ENCODE measurements at regions of chr2 and their contacts with region 1.

Region 1: DNA sequence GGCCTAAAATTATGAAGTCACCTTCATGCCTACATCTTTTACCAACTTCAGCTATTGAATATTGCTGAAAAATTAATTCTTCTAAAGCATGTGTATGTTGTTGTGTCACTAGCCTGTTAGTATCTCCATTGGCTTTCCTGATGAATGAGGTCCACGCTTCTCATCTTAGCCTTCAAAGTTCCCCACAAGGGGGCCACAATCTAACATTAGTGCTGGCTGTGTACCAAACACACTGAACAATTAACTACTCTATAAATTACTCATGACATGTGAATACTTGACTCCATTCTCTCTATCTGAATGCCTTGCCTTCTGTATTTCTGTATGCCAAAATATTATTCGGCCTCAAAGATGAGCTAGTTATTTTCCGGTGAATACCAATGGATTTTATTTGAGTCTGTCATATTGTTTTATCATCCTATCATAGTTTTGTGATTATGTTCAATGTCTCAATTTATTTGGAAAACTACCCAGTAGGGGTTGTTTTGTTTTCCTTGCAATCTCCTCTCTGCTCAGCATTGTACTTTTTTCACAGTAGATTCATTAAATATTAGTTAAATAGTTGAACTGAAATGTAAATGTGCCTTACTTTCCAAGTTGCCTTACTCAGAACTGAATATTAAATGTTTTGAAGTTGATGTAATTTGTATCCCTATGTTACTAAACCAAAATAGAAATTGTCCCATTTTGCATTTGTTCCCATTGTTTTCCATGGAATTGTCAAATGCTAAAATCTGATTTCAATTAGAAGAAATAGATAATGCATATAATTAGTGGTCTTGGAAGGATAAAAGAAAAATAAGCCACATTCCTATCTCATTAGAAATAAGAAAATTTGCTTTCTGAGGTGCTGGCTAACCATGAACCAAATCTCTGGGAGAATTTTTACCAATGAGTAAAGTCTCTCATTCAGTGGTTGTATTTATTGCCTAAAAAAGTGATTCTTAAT is 208.4 kb upstream of the COL3A1 start:
- DNase-seq: no peak
- ATAC-seq: peak; percentile 83
- H3K4me3 ChIP-seq: no peak overlapping the region
- H3K27ac ChIP-seq: no peak overlapping the region
- H3K4me1 ChIP-seq: no peaks in the 10 kb centered on the region
- H3K27me3 ChIP-seq: no peaks in the 10 kb centered on the region
- CTCF ChIP-seq: peak in 2 of 3 experiments; percentile 12 to 35; a peak in 2 of 6 replicates
- EP300 ChIP-seq: no peak
- POLR2A ChIP-seq: no peak
- RAD21 ChIP-seq: peak; percentile 31; the same call in 1 of the 2 replicates

Region 2: DNA sequence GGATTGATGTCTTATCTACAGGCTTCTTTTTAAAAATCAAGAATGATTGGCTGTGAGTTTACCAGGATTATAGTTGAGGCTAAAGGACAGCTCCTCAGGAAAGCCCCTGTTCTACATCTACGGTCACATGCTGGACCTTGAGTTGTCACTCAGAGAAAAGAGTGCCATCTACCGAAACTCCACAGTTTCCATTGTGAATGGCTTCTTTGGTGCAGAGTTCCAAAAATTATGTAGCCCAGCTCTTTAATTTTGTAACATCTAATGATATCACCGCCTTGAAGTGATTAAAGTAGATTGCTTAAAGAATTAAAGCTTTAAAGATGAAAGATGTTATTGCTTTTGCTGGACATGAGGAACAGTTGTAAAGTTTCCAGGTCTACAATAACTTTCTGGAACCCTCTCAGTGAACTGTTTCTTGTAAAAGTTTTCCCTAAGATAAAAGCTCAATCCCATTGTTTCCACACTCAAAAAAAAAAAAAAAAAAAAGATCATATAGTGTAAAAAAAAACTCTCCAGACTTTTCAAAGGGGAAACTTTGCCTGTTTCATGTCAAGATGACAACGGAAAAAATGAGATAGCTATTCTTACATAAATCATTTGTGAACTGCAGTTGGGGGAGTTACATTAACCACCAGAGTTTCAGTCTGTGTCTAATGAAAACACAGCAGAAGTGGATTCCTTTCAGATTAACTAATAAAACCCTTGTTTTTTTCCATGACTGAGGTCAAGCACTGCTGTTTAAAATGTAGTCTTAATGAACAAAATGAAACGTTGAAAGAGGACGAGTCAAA is 212.7 kb after region 1 on chr2:
- CTCF ChIA-PET with region 1: interaction called, 10 read pairs
- POLR2A ChIA-PET with region 1: no interaction called
- RAD21 ChIA-PET with region 1: interaction called, 5 read pairs
- SMC1A ChIA-PET with region 1: interaction called, 3 read pairs
- in situ Hi-C with region 1: no loop called
- intact Hi-C with region 1: no loop called
- DNase-seq: peak; percentile 23
- ATAC-seq: peak; percentile 94
- H3K4me3 ChIP-seq: no peak overlapping the region
- H3K27ac ChIP-seq: no peak overlapping the region
- H3K4me1 ChIP-seq: no peaks in the 10 kb centered on the region
- H3K27me3 ChIP-seq: no peaks in the 10 kb centered on the region
- CTCF ChIP-seq: peak; percentile 20 to 52 (median 24); a peak in 2 of 6 replicates
- EP300 ChIP-seq: peak; percentile 62 to 70; a peak in 3 of 4 replicates
- POLR2A ChIP-seq: no peak
- RAD21 ChIP-seq: peak; percentile 52; the same call in 1 of the 2 replicates

Region 3: DNA sequence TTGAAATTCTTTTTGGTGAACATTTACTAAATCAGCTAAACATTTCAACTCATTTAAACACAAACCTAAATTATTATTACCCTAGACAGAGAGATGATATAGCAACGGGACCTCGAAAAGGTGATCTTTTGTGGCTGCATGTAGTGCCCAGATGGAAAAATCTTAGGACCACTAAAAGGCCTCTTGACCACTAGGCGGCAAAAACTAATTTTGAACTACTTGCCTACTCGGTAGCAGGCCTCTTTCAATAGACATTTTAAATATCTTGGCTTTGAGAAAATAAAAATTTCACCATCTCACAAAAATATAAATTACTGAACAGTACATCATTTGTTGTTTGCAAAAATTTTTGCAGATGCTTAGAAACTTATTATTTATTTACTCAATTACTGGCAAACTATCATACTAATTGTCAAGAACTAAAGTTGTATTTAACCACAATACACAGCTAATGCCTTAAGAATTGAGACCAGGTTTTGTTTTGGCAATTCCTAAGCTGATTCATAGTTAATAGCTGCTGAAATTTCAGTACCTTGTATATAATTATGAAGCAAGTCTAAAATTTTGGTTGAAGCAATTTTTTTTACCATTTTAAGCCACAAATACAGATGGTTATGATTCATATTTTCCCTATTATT is 217.8 kb after region 1 on chr2:
- CTCF ChIA-PET with region 1: interaction called, 10 read pairs
- POLR2A ChIA-PET with region 1: no interaction called
- RAD21 ChIA-PET with region 1: interaction called, 5 read pairs
- SMC1A ChIA-PET with region 1: interaction called, 7 read pairs
- in situ Hi-C with region 1: no loop called
- intact Hi-C with region 1: loop called (anchors 2 kb)
- DNase-seq: no peak
- ATAC-seq: peak; percentile 54
- H3K4me3 ChIP-seq: no peak overlapping the region
- H3K27ac ChIP-seq: no peak overlapping the region
- H3K4me1 ChIP-seq: no peaks in the 10 kb centered on the region
- H3K27me3 ChIP-seq: no peaks in the 10 kb centered on the region
- CTCF ChIP-seq: peak; percentile 13 to 43 (median 16); a peak in 2 of 6 replicates
- EP300 ChIP-seq: no peak
- POLR2A ChIP-seq: no peak
- RAD21 ChIP-seq: peak; percentile 12; the same call in 1 of the 2 replicates

Measured in GM12878 (cell line).